ENCODE measurements at regions of chr6 and their contacts with region 1.

Region 1: DNA sequence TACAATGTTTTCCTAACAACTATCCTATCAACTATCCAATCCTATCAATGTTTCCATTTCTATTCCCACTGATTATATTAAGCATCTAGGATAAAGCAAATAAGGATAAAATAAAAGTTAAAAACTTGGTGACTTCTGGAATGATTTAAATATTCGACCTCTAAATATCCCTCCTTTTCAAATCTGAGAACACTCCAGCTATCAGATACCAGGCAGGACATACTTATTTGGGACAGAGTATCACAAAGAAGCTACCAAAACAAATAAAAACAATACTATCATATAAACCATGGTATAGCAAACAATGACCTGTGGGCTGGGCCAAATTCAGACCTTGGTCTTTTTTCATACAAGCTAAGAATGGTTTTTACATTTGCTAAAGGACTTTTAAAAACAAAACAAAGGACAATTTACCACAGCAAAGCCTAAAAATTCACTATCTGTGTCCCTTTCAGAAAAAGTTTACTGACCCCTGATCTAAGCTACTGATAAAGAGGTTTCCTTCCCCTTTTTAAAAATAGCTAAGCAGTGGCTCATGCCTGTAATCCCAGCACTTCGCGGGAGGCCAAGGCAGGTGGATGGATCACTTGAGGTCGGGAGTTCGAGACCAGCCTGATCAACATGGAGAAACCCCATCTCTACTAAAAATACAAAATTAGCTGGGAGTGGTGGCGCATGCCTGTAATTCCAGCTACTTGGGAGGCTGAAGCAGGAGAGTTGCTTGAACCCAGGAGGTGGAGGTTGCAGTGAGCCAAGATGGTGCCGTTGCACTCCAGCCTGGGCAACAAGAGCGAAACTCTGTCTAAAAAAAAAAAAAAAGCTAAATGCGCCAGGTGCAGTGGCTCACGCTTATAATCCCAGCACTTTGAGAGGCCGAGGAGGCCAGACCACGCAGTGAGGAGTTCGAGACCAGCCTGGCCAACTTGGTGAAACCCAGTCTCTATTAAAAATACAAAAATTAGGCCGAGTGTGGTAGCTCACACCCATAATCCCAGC is 6.0 kb downstream of the NUP153 start:
- DNase-seq: no peak
- ATAC-seq: no peak
- H3K4me3 ChIP-seq: no peak overlapping the region
- H3K4me3 Mint-ChIP-seq: peak overlapping the region in 7 of 10 donors; percentile 5 to 47 (median 29)
- H3K27ac ChIP-seq: peak overlapping the region; percentile 29
- H3K27ac Mint-ChIP-seq: peak overlapping the region in 8 of 9 donors; percentile 43 to 86 (median 59)
- H3K4me1 ChIP-seq: peaks cover 28% of the 10 kb centered on the region in 2 donors
- H3K4me1 Mint-ChIP-seq: peaks cover 21 to 81% (median 57%) of the 10 kb centered on the region in 7 donors
- H3K27me3 ChIP-seq: no peaks in the 10 kb centered on the region
- H3K27me3 Mint-ChIP-seq: no peaks in the 10 kb centered on the region

Region 2: DNA sequence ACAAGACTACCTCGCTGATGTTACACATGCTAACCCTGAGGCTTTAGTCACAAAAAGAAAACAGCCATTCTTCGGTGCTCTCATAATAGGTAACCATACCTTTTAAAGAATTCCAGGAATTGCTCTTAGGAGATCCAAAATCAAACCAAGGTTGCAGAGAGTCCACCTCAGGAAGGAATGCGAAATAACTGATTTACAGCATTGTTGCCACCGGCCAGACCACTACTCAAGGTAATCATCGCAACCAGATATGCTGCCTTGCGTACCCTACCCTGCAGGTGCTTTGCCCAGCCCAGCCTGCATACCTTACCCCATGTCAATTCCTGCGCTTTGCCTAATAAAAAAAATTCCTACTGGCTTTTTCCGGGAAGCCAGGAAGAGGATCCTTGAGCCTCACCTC is 21.0 kb before region 1 on chr6:
- CTCF ChIA-PET with region 1: interaction called, 3 read pairs
- POLR2A ChIA-PET with region 1: interaction called, 4 read pairs
- intact Hi-C with region 1: loop called (anchors 2 kb)
- DNase-seq: no peak
- ATAC-seq: no peak
- H3K4me3 ChIP-seq: no peak overlapping the region
- H3K4me3 Mint-ChIP-seq: peak overlapping the region in 1 of 10 donors; percentile 11
- H3K27ac ChIP-seq: no peak overlapping the region
- H3K27ac Mint-ChIP-seq: peak overlapping the region in 2 of 9 donors; percentile 45 to 67
- H3K4me1 ChIP-seq: peaks cover 7 to 16% of the 10 kb centered on the region in 2 donors
- H3K4me1 Mint-ChIP-seq: peaks cover 35 to 77% (median 64%) of the 10 kb centered on the region in 7 donors
- H3K27me3 ChIP-seq: no peaks in the 10 kb centered on the region
- H3K27me3 Mint-ChIP-seq: no peaks in the 10 kb centered on the region

Region 3: GRCh38 chr6:17820055-17820454 is 119.3 kb after region 1 on chr6:
- CTCF ChIA-PET with region 1: no interaction called
- POLR2A ChIA-PET with region 1: no interaction called
- intact Hi-C with region 1: loop called in 1 of 2 experiments (anchors 5 kb)
- DNase-seq: no peak
- ATAC-seq: no peak
- H3K4me3 ChIP-seq: no peak overlapping the region
- H3K4me3 Mint-ChIP-seq: no peak overlapping the region
- H3K27ac ChIP-seq: no peak overlapping the region
- H3K27ac Mint-ChIP-seq: no peak overlapping the region
- H3K4me1 ChIP-seq: no peaks in the 10 kb centered on the region
- H3K4me1 Mint-ChIP-seq: peaks cover 0 to 2% (median 0%) of the 10 kb centered on the region in 7 donors
- H3K27me3 ChIP-seq: no peaks in the 10 kb centered on the region
- H3K27me3 Mint-ChIP-seq: peaks cover 0 to 12% (median 4%) of the 10 kb centered on the region in 5 donors

Measured in naive thymus-derived CD4-positive, alpha-beta T cell (primary cell).